Gastrocnemius medialis (tissue), 4 donors: ENCODE measurements at regions of chr20 and their contacts with region 1.

Region 1: GRCh38 chr20:62550087-62550632 is 74.4 kb upstream of the GATA5 start:
- DNase-seq: peak; percentile 71 to 92
- ATAC-seq: peak; percentile 37 to 55
- H3K4me3 ChIP-seq: peak overlapping the region; percentile 50 to 81 (median 70)
- H3K27ac ChIP-seq: peak overlapping the region; percentile 91 to 100 (median 98)
- H3K4me1 ChIP-seq: peaks cover 35 to 66% of the 10 kb centered on the region in 2 donors
- H3K27me3 ChIP-seq: no peaks in the 10 kb centered on the region
- CTCF ChIP-seq: no peak
- POLR2A ChIP-seq: peak; percentile 46 to 64

Region 2: GRCh38 chr20:62536871-62537401 is 13.2 kb before region 1 on chr20:
- in situ Hi-C with region 1: no loop called
- intact Hi-C with region 1: loop called (anchors 1 kb)
- DNase-seq: peak; percentile 74 to 88
- ATAC-seq: peak; percentile 60 to 67
- H3K4me3 ChIP-seq: no peak overlapping the region
- H3K27ac ChIP-seq: peak overlapping the region; percentile 98
- H3K4me1 ChIP-seq: peaks cover 52 to 59% of the 10 kb centered on the region in 2 donors
- H3K27me3 ChIP-seq: no peaks in the 10 kb centered on the region
- CTCF ChIP-seq: no peak
- POLR2A ChIP-seq: peak; percentile 42 to 64

Region 3: DNA sequence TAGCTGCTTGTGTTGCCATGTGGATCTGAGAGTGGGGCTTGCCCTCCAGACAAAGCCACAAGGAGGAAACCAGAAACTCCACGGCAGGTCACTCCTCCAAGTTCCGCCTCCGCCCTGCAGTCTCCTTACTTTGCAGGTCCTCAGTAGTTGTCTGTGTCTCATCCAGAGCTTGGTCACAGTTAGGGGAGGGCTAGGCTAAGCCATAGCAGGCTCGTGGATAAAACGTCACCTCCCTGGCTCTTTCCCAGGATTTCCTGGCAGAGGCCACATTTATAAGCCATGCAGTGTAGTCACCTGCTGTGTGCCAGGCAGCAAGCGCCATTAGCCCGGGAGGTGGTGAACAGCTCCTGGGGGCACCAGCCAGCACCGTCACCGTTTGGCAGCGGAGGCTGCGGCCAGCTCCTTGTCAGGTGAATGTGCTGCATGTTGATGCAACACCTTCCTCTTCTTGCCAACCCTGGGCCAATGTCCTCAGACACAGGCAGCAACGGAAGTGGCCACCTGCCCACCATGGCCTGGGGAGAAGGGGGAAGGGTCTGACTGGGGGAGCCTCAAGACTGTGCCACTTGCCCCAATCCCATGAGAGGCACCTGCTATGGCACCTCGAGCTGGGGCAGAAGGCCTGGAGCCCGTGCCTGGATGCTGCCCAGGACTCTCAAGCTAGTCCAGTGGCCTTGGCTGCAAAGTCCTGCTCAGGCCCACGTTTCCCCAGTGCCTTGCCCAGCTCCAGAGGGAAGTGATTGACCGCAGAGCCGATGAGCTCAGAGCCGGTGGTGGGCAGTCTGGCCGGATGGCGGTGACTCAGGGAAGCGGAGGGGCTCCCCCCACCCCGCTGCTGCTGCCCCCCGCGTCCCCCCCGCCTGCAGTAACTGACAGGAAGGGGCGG is 53.1 kb after region 1 on chr20:
- in situ Hi-C with region 1: no loop called
- intact Hi-C with region 1: loop called (anchors 2 kb)
- DNase-seq: peak; percentile 32 to 79
- ATAC-seq: peak; percentile 53 to 71
- H3K4me3 ChIP-seq: no peak overlapping the region
- H3K27ac ChIP-seq: peak overlapping the region in 3 of 4 donors; percentile 16 to 64 (median 58)
- H3K4me1 ChIP-seq: peaks cover 6 to 17% of the 10 kb centered on the region in 2 donors
- H3K27me3 ChIP-seq: peaks cover 21 to 26% (median 23%) of the 10 kb centered on the region in 3 donors
- CTCF ChIP-seq: no peak
- POLR2A ChIP-seq: peak in 1 of 2 donors; percentile 13